ENCODE measurements at regions of chr22 and their contacts with region 1.

Region 1: GRCh38 chr22:47307326-47307725 is 544.9 kb downstream of the TBC1D22A start:
- DNase-seq: no peak
- H3K4me3 ChIP-seq: no peak overlapping the region
- H3K4me3 Mint-ChIP-seq: no peak overlapping the region
- H3K27ac Mint-ChIP-seq: no peak overlapping the region
- H3K4me1 ChIP-seq: no peaks in the 10 kb centered on the region
- H3K4me1 Mint-ChIP-seq: no peaks in the 10 kb centered on the region
- H3K27me3 ChIP-seq: no peaks in the 10 kb centered on the region
- H3K27me3 Mint-ChIP-seq: peaks cover 2% of the 10 kb centered on the region
- CTCF ChIP-seq: no peak

Region 2: DNA sequence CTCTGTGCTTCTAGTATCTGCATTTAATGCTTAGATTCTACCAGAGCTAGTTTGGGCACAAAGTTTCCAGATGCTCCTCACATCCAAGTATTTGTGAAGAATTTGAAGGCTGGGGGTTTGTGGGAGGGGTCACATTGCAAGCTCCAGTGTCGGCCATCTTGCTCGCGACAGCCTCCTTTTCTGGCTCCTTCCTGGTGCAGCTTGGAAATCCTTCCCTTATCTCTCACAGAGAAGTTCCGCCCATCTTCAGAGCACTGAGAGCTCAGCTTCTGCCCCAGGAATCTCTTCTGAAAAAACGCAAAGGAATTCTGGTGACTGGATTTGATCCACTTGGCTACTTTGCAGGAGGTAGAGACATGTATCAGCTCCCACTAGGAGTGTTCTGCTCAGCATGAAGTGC is 47.3 kb before region 1 on chr22:
- CTCF ChIA-PET with region 1: no interaction called
- POLR2A ChIA-PET with region 1: no interaction called
- intact Hi-C with region 1: loop called (anchors 2 kb)
- DNase-seq: no peak
- H3K4me3 ChIP-seq: no peak overlapping the region
- H3K4me3 Mint-ChIP-seq: no peak overlapping the region
- H3K27ac Mint-ChIP-seq: no peak overlapping the region
- H3K4me1 ChIP-seq: no peaks in the 10 kb centered on the region
- H3K4me1 Mint-ChIP-seq: no peaks in the 10 kb centered on the region
- H3K27me3 ChIP-seq: no peaks in the 10 kb centered on the region
- H3K27me3 Mint-ChIP-seq: peaks cover 11% of the 10 kb centered on the region
- CTCF ChIP-seq: no peak